Right ventricle myocardium inferior (tissue), 1 donor: ENCODE measurements at regions of chr12 and their contacts with region 1.

Region 1: GRCh38 chr12:86513226-86513625 is 257.0 kb upstream of the MGAT4C start:
- DNase-seq: no peak
- ATAC-seq: no peak

Region 2: DNA sequence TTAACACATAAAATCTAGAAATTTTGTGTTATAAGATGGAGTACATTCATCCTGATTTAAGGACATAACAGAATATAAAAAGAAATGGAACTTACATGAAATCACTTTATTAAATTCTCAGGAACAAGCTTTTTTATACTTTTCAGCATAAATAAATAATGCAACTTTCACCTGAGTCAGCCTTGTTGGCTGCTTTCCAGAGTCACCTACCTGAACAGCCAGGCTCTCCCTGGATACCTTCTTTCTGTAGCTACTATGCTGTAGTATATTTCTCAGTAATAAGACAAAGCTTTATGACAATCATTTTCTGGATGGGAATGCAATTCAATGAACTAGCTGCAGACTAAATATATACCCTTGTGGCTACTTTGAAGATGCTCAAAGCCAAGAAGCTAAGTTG is 527.2 kb before region 1 on chr12:
- intact Hi-C with region 1: no loop called
- DNase-seq: no peak
- ATAC-seq: no peak

Region 3: DNA sequence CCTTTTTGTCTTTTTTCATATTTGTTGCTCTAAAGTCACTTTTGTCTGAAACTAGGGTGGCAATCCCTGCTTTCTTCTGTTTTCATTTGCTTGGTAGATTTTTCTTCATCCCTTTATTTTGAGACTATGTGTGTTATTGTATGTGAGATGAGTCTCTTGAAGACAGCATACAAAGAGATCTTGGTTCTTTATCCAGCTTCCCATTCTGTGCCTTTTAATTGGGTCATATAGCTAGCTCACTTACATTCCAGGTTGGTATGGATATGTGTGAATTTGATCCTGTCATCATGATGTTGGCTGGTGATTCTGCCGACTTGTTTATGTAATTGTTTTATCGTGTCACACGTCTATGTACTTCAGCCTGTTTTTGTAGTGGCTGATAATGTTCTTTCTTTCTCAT is 10.6 kb after region 1 on chr12:
- intact Hi-C with region 1: loop called (anchors 1 kb)
- DNase-seq: no peak
- ATAC-seq: no peak